Activated naive CD4-positive, alpha-beta T cell treated with anti-CD3 and anti-CD28 coated beads for 36 hours (primary cell): ENCODE measurements at regions of chr22 and their contacts with region 1.

Region 1: DNA sequence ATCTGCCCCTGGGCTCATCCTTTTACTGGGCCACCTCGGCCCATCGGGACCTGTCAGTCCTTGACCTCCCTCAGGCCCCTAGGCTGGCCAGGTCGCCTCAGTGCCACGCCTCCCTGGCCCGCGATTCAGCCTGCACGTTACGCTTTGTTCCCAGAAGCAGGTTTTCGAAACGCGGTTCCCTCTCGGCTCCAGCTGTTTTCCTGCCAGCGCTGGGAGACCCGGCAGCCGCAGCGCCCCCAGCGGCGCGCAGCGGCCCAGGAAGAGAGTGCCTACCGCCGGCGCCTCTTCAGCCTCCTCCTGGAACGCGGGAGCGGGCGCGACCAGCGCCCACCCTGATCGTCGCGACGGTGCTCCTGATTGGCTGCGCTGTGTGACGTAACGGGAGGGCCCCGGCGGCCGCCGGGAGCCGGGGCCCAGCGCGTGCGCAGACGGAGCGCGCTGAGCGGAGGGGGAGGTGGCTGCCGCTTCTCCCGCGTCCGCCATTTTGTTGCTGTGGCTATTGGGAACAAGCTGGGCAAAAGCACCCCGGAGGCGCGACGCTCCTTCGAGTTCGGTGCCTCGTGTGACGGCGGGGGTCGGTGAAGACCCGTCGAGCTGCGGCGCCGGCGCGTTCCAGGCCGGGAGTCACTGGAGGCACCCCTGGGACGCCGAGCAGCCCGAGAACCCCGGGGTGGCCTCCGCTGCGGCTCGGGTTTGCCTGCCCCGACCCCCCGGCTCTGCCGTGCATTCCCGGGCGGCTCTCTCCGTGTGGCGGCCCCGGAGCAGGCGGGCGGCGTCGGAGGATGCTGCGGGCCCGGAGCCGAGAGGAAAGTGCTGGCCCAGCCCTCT is at the start of gene CRKL:
- DNase-seq: peak; percentile 97
- H3K4me3 Mint-ChIP-seq: peak within 1 kb of the TSS; percentile 98
- H3K27ac Mint-ChIP-seq: peak within 1 kb of the TSS; percentile 86
- H3K4me1 Mint-ChIP-seq: peaks cover 28% of the 10 kb centered on the region
- H3K27me3 Mint-ChIP-seq: no peaks in the 10 kb centered on the region
- total RNA-seq, gene CRKL: 60.5 to 62.2 TPM

Region 2: DNA sequence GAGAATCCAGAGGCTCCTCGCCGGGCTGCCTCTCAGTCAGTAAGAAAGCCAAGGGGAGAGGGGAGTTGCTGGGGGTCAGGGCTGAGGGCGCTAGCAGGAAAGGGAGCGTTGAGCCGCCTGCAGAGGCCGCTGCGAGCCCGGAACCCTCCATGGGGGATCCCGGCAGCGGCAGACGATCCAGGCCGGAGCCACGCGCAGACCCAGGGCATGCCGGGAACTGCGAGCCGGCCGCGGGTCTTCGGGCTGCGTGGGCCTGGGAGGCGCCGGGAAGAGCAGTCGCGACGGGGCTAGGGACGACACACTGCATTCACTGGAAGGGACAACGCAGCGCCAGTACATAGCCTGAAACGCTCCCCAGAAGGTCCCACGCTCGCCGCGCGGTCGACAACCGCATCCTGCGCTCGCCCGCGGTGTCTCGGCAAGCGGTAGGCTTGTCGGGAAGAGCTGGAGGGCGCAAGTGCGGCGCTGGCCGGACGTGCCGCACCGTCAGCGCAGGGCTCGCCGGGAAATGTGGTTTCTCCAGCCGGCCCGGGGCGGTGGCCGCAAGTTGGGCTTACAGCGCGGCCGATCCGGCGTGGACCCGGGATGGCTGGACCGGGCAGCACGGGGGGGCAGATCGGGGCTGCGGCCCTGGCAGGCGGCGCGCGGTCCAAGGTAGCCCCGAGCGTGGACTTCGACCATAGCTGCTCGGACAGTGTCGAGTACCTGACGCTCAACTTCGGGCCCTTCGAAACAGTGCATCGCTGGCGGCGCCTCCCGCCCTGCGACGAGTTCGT is 64.8 kb after region 1 on chr22 and contains the start of gene LZTR1:
- CTCF ChIA-PET with region 1: no interaction called
- intact Hi-C with region 1: loop called (anchors 1 kb)
- DNase-seq: peak; percentile 80
- H3K4me3 Mint-ChIP-seq: peak within 1 kb of the TSS; percentile 97
- H3K27ac Mint-ChIP-seq: peak within 1 kb of the TSS; percentile 87
- H3K4me1 Mint-ChIP-seq: peaks cover 41% of the 10 kb centered on the region
- H3K27me3 Mint-ChIP-seq: no peaks in the 10 kb centered on the region
- total RNA-seq, gene LZTR1: 23.1 to 27.4 TPM